SK-MEL-5 (cell line): ENCODE measurements at regions of chr17 and their contacts with region 1.

Region 1: DNA sequence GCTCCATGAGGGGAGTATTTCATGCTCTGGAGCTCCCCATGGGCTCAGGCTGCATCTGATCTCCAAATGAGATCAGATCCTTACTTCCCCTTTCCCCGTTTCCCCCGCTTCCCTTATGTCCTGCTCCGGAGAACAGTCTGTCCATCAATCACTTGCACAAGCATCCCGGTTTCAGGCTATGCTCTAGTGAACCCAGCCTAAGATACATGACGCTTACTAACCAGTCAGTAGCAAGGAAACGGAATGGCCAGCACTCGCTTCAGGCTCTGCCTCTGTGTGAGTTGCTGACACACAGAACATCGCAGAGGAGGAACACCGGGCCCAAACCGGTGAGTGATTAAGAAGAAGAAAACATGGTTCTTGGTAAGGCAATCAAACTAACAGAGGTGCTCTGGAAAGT is 9.4 kb upstream of the ATP5MC1 start:
- DNase-seq: no peak

Region 2: DNA sequence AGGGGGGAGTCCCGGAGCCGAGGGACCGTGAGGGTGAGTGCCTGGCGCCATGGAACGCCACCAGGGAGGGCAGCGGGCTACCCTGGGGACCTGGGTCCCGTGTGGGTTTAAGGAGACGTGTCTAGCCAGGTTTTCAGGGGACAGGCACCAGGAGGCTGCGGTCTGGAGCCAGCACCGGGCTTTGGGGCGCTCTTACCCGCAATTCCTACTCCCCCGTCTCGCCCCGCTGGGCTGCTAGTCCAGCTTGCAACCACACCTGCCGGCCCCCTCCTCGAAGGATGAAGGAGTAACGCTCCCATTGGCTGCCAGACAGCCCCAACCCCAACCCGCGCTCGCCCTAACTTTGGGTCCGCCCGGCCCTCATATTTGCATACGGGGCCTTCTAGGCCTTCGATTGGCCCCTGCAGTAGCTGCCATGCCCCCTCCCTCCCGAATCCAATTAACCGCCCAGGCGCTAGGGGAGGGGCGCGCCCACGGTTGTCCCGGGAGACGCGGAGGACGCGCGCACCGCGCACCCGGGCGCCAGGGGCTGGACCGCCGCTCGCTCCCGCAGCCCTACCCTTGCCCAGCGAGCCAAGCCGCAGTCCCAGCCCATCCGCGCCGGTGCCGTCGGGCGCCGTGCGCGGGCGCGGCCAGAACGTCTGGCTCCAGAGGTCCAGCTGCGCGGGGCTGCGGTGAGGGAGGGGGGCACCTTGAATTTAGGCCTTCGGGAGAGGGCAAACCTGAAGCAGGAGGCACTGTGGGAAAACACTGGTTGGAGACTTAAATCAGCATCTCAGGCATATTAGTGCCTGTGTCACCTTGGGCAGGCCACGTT is 66.2 kb before region 1 on chr17 and contains the start of gene TTLL6:
- in situ Hi-C with region 1: loop called (anchors 10 kb)
- DNase-seq: peak; percentile 53
- total RNA-seq, gene TTLL6: 1.7 and 2.1 TPM in 2 replicates